ENCODE measurements at regions of chr1 and their contacts with region 1.

Region 1: GRCh38 chr1:27556781-27557595 is 47.0 kb downstream of the AHDC1 start:
- DNase-seq: peak; percentile 91
- CTCF ChIP-seq: peak; percentile 85

Region 2: DNA sequence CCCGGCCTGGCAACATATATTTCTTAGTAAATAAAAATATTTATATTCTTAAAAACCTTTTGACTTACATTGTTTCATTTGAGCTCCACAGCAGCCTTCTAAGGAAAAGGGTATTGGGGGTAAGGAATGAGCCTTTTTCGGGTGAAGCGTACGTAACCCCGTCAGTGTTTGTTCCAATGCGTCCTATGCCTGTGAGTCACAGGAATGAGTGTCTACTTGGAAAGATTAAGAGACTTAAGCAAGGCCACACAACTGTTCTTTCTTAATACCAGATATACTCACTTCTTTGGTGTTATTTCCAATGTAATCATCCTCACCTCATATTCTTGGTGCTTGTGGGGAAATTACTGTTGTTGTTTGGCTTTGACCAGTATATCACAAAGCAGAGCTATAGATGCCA is 299.8 kb before region 1 on chr1:
- CTCF ChIA-PET with region 1: no interaction called
- POLR2A ChIA-PET with region 1: no interaction called
- DNase-seq: no peak
- CTCF ChIP-seq: no peak

Region 3: DNA sequence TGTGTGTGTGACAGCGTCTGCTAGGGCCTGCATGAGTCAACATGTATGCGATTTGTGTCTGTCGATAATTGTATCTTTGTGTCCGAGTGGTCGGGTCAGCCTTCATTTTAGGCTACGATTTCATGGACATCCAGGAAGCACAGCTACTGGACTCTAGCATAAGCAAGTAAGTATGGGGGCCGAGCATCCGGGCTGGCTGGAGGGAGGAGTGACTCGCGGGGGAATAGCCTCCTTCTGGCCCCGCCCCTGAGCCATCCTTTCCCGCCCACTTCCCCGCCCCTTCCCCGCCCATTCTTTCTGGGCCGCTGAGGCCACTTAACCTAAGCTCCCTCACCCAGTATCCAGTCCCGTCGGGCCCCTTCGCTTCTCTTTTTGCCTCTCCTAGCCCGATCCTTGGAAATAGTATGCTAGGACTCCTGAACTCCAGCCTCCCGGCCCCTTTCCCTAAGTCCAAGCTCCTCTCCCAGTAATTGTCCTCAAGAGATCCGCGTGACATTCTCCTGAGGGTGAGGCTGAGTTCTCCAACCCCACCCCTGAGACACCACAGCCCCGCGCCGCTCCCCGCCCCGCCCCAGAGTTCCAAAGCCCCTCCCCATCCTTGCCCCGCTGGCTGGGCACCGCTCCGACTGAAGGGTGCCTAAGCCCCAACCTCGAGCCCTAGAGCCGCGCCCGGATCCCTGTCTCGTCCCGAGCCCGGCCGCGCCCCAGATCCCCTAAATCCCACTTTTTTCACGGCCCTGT is 191.4 kb before region 1 on chr1:
- CTCF ChIA-PET with region 1: no interaction called
- POLR2A ChIA-PET with region 1: no interaction called
- DNase-seq: peak; percentile 94
- CTCF ChIP-seq: no peak

Region 4: DNA sequence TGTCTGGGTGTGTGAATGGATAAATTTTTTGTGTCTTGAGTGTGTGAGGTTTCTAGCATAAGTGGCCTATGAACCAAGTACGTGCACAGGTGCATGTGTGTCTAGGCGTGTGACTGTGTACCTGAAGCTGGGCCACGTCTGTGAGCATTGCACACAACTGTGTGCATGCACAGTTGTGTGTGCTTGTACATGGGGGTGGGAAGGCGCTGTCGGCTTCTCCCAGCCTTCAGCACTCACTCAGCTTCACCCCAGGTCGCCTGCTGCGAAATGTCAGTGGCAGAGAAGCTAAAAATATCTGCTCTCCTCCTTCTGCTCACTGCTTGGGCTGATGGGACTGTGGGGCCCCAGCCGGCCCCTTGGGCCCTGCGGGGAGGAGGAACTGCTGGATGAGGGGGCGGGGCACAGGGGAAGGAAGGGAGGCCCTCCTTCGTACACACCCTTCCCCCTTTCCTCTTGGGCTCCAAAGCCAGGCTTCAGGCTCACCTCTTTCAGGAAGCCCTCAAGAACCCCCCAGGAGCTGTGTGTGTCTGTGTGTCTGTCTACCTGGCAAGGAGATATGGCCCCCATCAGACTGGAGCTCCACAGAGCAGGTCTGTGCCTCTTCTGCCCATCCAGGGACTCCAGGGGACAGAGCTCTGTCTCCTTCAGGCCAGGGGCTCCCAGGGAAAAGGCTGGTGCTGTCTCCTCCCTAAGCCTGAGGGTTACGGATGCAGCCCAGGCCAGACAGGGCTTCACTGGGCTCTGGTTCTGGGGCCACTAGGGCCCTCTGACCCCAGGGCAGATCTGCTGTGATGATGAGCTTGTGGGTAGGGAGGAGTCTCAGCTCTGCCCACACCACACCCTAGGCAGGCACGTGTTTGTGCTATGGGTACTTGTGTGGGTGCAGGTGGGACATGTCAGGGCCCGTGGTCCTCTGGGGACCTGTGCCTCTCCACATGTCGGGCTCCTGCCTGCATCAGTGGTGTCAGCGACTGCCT is 31.4 kb before region 1 on chr1:
- CTCF ChIA-PET with region 1: interaction called, 39 read pairs
- POLR2A ChIA-PET with region 1: no interaction called
- DNase-seq: peak; percentile 87
- CTCF ChIP-seq: no peak

Region 5: GRCh38 chr1:27542408-27543273 is 14.3 kb before region 1 on chr1:
- CTCF ChIA-PET with region 1: interaction called, 83 read pairs
- POLR2A ChIA-PET with region 1: no interaction called
- DNase-seq: no peak
- CTCF ChIP-seq: no peak

Region 6: GRCh38 chr1:27581823-27582243 is 24.8 kb after region 1 on chr1:
- CTCF ChIA-PET with region 1: interaction called, 163 read pairs
- POLR2A ChIA-PET with region 1: no interaction called
- DNase-seq: no peak
- CTCF ChIP-seq: no peak

Region 7: DNA sequence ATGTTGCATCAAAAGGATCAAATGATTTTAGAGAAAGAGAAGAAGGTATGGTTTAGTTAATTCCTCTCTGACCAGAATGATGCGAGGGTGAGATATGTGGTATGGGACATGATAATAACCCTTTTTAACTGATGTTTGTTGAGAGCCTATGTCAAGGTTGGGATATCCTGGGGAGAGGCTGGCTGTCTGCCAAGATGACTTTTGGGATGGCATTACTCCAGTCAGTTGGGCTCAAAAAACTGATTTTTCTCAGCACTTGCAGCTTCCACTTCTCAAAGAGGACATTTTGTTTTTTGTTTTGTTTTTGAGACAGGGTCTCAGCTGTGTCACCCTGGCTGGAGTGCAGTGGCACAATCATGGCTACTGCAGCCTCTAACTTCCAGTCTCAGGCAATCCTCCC is 198.3 kb after region 1 on chr1:
- CTCF ChIA-PET with region 1: no interaction called
- POLR2A ChIA-PET with region 1: no interaction called
- DNase-seq: no peak
- CTCF ChIP-seq: no peak

Region 8: DNA sequence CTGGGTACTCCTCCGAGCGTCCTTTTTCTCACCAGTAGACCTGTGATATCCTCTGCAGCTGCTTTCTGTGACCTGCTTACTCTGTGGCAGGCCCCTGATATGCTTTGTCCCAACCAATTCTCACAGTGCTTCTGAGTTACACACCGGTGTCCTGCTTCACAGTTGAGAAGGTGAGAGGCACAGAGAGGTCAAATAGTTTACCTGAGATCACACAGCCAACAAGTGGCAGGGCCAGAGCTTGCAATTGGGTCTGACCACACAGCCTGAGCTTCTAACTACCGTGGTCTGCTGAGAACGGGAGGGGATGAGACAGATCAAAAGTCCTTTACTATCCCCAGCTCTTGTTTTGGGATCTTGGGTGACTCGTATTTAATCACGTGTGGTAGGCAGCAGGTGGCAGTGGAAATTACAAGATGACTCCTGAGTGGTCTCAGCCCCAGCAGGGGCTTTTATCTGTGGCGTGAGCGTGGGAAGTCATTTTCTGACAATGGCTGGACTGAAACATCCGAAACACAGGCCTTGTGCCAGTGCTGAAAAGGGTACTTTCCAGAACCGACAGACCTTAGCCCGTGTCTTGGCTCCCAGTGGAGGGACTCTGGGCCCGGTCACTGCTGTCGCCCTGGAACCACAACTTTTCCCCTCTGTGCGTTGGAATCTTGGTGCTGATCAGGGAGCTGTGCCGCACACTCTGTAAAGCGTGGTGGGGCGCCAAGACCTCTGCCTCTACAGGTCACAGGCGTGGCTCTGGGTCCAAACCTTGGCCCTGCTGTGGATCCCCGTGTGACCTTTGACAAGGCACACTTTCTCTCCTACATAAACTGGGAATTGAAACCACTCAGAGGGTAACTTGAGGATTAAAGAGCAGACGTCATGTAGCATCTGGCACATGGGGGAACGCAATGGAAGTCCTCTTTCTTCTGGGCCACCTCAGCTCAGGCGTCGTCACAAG is 327.3 kb after region 1 on chr1:
- CTCF ChIA-PET with region 1: no interaction called
- POLR2A ChIA-PET with region 1: no interaction called
- DNase-seq: peak; percentile 58
- CTCF ChIP-seq: no peak